HEK293 (cell line): ENCODE measurements at regions of chr7 and their contacts with region 1.

Region 1: DNA sequence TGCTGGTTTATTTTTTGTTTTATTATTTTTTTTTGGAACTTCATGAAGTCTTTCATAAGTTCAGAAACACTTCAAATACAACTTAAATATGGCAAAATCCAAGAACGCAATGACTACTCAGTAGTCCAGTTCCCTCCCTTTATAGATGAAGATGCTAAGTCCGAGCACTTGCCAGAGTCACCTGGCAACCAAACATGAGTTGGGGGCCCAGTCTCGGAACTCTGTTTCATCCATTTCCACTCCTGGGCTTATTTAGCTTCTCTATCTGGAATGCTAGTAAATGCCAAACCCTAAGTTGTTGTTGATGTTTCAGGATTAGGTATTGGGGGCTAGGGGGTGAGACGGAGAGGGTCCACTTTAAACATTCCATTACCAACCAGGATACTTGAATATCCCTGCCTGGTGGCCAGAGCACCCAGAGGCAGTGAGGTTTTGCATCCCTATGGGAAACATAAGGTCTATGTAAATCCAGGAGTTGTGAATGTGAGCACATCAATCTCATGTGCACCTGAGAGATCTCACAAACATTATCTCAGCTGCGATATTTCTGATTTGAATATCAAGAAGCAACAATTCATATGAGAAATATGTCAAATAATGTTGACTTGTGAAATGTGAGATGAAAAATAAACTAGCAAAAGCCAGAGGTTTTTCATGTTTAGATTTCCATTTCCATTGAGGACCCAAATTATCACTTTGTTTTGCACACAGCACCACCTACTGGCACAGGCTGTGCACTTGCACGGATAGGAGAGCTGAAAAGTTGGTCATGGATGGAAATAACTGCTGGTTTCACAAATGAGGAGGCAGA is 129.3 kb downstream of the PKD1L1 start:
- H3K4me3 ChIP-seq: no peak overlapping the region
- H3K27ac ChIP-seq: no peak overlapping the region
- H3K4me1 ChIP-seq: no peaks in the 10 kb centered on the region
- CTCF ChIP-seq: peak; percentile 61; the same call in 1 of the 2 replicates

Region 2: DNA sequence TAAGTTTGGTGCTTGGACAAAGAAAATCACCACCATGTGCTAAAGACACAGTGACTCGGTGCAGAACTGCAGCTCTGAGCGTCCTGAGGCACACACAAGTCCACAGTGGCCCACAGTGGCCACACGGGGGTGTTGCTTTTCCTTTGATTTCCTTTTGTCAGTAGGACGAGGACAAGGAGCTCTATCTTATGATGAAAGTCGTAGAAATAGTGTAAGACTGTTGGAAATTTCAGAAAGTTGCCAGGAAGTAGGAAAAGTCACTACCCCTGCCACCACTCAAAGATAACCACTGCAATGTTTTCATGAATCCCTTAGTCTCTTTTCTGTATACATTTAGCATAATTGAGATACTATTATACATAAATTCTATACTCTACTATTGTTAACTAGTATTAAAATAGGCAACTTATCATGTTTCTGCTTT is 383.1 kb before region 1 on chr7:
- CTCF ChIA-PET with region 1: interaction called, 18 read pairs
- POLR2A ChIA-PET with region 1: interaction called, 4 read pairs
- H3K4me3 ChIP-seq: no peak overlapping the region
- H3K27ac ChIP-seq: no peak overlapping the region
- H3K4me1 ChIP-seq: no peaks in the 10 kb centered on the region
- CTCF ChIP-seq: peak; percentile 23; the same call in 1 of the 2 replicates

Region 3: DNA sequence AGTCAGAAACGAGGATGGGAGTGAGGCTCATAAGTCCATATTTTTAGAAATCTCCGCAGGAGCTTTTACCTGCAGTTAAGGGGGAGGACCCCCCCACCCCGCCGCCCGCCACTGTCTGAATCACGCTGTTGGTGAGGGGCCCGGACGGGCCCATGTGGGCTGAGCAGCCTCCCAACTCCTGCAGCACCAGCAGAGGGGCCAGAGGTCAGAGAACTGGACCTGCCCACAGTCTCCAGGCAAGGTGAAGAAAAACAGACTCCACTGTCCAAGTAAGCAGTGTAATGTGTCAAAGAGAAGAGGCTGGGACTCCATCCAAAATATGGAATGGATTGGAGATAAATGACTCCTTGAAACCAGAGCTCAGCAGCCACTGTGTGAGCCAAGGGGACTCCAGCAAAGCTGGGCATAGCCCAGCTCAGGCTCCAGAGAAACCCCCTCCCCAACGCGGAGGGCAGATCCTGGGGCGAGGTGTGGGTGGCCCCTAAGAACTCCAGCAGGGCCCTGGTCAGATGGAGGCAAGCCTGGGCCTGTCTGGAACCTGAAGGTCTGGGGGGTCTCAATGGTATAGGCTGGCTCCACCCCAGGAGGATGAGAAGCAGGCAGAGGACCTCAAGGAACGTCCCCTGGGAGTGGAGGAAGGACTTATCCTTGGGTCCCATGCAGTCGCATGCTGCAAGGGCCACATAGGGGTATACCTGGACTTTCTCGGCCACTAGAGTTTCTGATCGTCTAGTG is 108.6 kb before region 1 on chr7:
- CTCF ChIA-PET with region 1: no interaction called
- POLR2A ChIA-PET with region 1: no interaction called
- H3K4me3 ChIP-seq: no peak overlapping the region
- H3K27ac ChIP-seq: no peak overlapping the region
- H3K4me1 ChIP-seq: no peaks in the 10 kb centered on the region
- CTCF ChIP-seq: no peak